ENCODE measurements at regions of chr15 and their contacts with region 1.

Region 1: GRCh38 chr15:71651750-71652186 is 158.6 kb upstream of the NR2E3 start:
- DNase-seq: no peak
- ATAC-seq: no peak

Region 2: GRCh38 chr15:71547011-71547410 is 104.8 kb before region 1 on chr15:
- intact Hi-C with region 1: loop called (anchors 5 kb)
- DNase-seq: peak; percentile 74
- ATAC-seq: peak; percentile 66

Region 3: GRCh38 chr15:71575474-71576045 is 76.2 kb before region 1 on chr15:
- intact Hi-C with region 1: loop called (anchors 5 kb)
- DNase-seq: no peak
- ATAC-seq: no peak

Region 4: DNA sequence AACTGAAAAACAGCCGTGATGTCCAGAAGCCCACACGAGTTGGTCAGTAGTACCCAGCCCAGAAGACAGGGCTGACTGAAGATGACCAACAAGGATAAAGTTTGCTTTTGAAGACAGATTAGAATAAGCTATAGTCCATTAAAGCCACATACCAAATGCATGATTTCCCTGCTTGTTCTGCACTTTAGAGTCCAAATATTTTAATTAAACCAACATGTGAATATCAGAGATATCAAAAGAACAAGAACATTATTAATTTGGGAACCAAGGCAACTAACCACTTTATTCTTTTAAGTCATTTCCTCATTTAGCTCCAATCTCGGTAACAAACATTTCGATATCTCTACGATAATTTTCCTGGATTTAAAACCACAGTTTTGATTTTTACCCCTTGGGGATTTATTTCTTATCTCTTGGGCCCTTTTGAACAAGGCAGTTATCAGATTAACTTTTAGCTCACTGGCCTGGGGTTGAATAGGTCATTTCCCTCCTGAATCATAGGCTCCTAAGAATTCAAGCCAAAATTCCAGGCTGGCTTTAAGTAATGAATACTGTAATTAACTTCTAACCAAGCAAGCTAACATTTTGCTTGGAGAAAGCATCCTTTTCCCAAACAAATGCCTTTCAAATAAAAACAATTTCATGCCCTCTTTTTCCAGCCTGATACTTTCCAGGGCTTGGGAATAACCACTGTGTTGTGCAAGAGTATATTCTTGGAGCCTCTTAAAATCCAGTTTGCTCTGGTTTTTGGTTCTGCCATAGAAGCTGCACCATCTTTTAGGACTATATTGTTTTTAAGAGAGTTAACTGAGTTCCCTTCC is 55.7 kb after region 1 on chr15:
- intact Hi-C with region 1: loop called (anchors 10 kb)
- DNase-seq: no peak
- ATAC-seq: peak; percentile 37

Region 5: GRCh38 chr15:71730277-71731144 is 78.7 kb after region 1 on chr15:
- intact Hi-C with region 1: loop called (anchors 5 kb)
- DNase-seq: no peak
- ATAC-seq: peak; percentile 76

Measured in Right ventricle myocardium inferior (tissue), 1 donor.